ENCODE measurements at regions of chr7 and their contacts with region 1.

Region 1: GRCh38 chr7:155298834-155299534 is 1.3 kb downstream of the INSIG1 start:
- DNase-seq: peak; percentile 95 to 96
- ATAC-seq: peak; percentile 79 to 85
- H3K4me3 ChIP-seq: peak overlapping the region; percentile 56 to 96 (median 76)
- H3K27ac ChIP-seq: peak overlapping the region; percentile 81 to 92 (median 88)
- H3K4me1 ChIP-seq: peaks cover 14 to 17% of the 10 kb centered on the region in 2 donors
- H3K27me3 ChIP-seq: no peaks in the 10 kb centered on the region
- CTCF ChIP-seq: no peak
- POLR2A ChIP-seq: peak; percentile 44 to 79

Region 2: DNA sequence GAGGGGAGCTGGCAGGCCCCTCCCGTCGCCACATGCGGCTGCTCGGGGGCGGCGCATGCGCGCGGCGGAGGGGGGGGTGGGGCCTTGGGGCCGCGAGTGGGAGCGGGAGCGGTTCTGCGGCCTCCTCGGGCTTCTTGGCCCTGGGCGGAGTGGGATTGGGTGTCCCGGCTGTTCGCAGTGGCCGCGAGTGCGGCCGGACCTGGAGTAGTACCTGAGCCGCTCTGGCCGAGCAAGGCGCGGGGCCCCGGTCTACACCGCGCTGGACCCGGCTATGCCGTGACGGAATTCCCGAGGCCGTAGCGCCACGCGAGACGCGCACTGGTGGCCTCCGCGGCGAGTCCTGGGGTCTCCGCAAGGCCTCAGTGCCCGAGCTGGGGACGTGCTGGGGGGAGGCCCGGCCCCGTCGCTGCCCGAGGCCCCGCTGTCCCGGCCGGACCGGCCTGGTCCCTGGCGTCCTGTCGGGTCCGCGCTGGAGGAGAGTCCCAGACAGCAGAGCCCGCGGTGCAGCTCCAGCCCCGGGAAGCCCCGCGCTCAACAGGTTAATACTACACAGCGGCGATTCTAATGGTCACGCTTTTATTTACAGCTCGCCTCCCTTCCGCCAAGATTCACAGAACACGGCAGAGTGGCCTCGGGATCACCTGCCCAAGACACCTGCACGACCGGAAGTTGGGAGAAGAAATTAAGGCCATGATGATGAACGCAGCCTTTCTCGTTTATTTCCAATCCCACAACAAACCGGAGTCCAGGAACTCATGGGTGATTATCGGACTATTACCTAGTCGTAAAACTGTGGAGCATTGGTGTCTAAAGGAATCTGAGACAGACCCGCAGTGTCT is 295.4 kb before region 1 on chr7:
- in situ Hi-C with region 1: no loop called
- intact Hi-C with region 1: loop called (anchors 1 kb)
- DNase-seq: peak; percentile 63 to 79
- ATAC-seq: peak; percentile 91 to 93
- H3K4me3 ChIP-seq: peak overlapping the region; percentile 74 to 96 (median 86)
- H3K27ac ChIP-seq: peak overlapping the region; percentile 87 to 97 (median 93)
- H3K4me1 ChIP-seq: peaks cover 17 to 18% of the 10 kb centered on the region in 2 donors
- H3K27me3 ChIP-seq: no peaks in the 10 kb centered on the region
- CTCF ChIP-seq: no peak
- POLR2A ChIP-seq: peak; percentile 85 to 86

Region 3: DNA sequence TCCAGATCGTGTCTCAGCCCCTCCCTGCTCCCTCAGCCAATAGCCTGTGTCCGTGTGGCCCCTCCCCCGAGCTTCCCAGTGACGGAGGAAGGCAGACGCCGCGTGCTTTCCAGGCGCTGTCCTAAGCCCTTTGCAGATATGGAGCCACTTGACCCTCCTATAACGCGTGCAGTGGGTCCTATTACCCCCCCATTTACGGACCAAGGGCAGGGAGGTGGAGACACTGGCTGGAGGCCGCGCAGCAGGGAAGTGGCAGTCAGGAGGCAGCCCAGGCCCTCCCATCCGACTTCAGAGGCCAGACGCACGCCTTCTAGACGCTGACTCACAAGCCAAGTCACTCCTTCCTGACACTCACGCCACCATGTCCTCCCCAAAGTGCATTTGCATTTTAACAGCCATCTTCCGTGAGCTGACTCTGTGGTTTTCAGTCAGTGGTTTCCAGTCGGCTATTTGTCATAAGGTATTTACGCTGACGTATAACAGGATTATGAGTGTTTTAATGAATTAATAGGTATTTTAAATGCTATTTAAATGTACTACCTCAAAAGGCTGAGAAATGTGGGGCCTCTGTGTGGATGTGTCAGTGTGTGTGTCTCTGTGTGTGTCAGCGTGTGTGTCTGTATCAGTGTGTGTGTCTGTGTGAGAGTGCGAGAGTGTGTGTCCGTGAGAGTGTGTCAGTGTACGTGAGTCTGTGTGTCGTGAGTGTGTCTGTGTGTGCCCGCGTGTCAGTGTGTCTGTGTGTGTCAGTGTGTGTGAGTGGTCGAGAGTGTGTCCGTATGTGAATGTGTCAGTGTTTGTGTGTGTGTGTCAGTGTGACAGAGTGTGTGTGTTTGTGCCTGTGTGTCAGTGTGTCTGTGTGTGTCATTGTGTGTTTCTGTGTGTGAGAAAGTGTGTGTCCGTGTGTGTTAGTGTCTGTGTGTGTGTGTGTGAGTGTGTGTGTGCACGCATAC is 93.3 kb before region 1 on chr7:
- in situ Hi-C with region 1: no loop called
- intact Hi-C with region 1: loop called (anchors 2 kb)
- DNase-seq: peak; percentile 78 to 87
- ATAC-seq: peak; percentile 85 to 87
- H3K4me3 ChIP-seq: peak overlapping the region; percentile 22 to 49 (median 44)
- H3K27ac ChIP-seq: peak overlapping the region; percentile 76 to 84 (median 80)
- H3K4me1 ChIP-seq: peaks cover 0 to 12% of the 10 kb centered on the region in 2 donors
- H3K27me3 ChIP-seq: no peaks in the 10 kb centered on the region
- CTCF ChIP-seq: no peak
- POLR2A ChIP-seq: peak; percentile 50 to 70

Region 4: GRCh38 chr7:155257482-155258225 is 41.3 kb before region 1 on chr7:
- in situ Hi-C with region 1: no loop called
- intact Hi-C with region 1: loop called (anchors 1 kb)
- DNase-seq: peak; percentile 58 to 82
- ATAC-seq: peak; percentile 76 to 80
- H3K4me3 ChIP-seq: peak overlapping the region; percentile 9 to 48 (median 28)
- H3K27ac ChIP-seq: peak overlapping the region; percentile 77 to 88 (median 80)
- H3K4me1 ChIP-seq: peaks cover 9 to 14% of the 10 kb centered on the region in 2 donors
- H3K27me3 ChIP-seq: no peaks in the 10 kb centered on the region
- CTCF ChIP-seq: no peak
- POLR2A ChIP-seq: no peak

Region 5: DNA sequence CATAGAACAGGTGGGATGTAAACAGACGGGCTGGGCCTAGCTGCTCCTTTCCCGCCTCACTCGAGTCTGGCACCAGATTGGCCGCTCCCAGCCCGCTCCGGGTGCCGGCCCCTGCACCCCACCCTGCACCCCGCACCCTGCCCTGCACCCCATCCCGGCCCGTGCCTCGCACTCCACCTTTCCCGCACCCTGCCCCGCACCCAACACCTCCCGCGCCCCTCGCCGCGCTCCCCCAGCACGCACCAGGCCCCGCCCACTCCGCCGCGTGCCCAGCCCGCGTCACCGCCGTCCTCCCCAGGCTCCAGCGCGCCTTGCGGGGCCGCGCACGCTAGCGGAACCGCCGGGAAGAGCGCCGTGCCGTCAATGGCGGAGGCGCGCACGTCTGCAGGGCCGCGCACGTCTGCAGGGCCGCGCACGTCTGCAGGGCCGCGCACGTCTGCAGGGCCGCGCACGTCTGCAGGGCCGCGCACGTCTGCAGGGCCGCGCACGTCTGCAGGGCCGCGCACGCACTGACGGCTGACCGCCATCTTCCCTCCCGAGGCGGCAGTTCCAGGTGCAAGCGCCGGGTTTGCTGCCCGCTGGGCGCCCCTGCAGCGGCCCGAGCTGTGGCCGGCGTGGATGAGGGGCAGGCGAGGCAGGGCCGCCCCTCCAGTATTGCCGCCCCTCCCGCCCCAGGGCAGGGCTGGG is 1839.6 kb after region 1 on chr7 and contains the start of gene UBE3C:
- in situ Hi-C with region 1: no loop called
- intact Hi-C with region 1: loop called (anchors 2 kb)
- DNase-seq: peak; percentile 72 to 86
- ATAC-seq: peak; percentile 85
- H3K4me3 ChIP-seq: peak within 1 kb of the TSS; percentile 79 to 93 (median 80)
- H3K27ac ChIP-seq: peak within 1 kb of the TSS; percentile 81 to 94 (median 91)
- H3K4me1 ChIP-seq: peaks cover 30 to 42% of the 10 kb centered on the region in 2 donors
- H3K27me3 ChIP-seq: no peaks in the 10 kb centered on the region
- CTCF ChIP-seq: no peak
- POLR2A ChIP-seq: peak; percentile 79 to 89
- total RNA-seq, gene UBE3C: 64.4 to 123 (median 76.3) TPM

Measured in gastrocnemius medialis (tissue), 4 donors.